ENCODE measurements at regions of chr20 and their contacts with region 1.

Region 1: GRCh38 chr20:4787069-4787468 is 65.4 kb downstream of the PRND start:
- DNase-seq: no peak
- H3K4me3 ChIP-seq: no peak overlapping the region
- H3K27ac ChIP-seq: no peak overlapping the region
- H3K4me1 ChIP-seq: no peaks in the 10 kb centered on the region
- H3K27me3 ChIP-seq: no peaks in the 10 kb centered on the region
- CTCF ChIP-seq: no peak
- POLR2A ChIP-seq: no peak

Region 2: DNA sequence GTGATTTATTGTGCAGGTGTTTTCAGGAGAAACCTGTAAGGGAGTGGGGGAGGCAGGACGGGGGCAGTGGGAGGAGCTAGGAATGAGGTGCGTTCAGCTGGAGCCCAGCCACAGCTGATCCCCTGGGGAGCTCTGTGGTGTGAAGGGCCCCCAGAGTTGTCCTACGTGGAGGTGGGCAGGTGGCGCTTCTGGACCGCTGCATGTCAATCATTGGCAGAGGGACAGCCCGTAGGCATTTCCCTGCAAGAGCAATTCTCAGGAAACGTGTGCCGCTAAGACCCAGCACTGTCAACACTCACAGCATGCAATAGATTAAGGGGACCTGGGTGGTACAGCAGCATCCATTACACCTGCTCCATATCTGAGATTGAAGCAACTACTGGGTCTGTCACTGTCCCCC is 22.6 kb after region 1 on chr20:
- intact Hi-C with region 1: loop called (anchors 2 kb)
- DNase-seq: no peak
- H3K4me3 ChIP-seq: no peak overlapping the region
- H3K27ac ChIP-seq: no peak overlapping the region
- H3K4me1 ChIP-seq: no peaks in the 10 kb centered on the region
- H3K27me3 ChIP-seq: no peaks in the 10 kb centered on the region
- CTCF ChIP-seq: no peak
- POLR2A ChIP-seq: no peak

Region 3: GRCh38 chr20:4875578-4876067 is 88.6 kb after region 1 on chr20:
- intact Hi-C with region 1: no loop called
- DNase-seq: no peak
- H3K4me3 ChIP-seq: no peak overlapping the region
- H3K27ac ChIP-seq: no peak overlapping the region
- H3K4me1 ChIP-seq: no peaks in the 10 kb centered on the region
- H3K27me3 ChIP-seq: no peaks in the 10 kb centered on the region
- CTCF ChIP-seq: no peak
- POLR2A ChIP-seq: no peak

Measured in breast epithelium (tissue), 4 donors.